ENCODE measurements at regions of chr6 and their contacts with region 1.

Region 1: DNA sequence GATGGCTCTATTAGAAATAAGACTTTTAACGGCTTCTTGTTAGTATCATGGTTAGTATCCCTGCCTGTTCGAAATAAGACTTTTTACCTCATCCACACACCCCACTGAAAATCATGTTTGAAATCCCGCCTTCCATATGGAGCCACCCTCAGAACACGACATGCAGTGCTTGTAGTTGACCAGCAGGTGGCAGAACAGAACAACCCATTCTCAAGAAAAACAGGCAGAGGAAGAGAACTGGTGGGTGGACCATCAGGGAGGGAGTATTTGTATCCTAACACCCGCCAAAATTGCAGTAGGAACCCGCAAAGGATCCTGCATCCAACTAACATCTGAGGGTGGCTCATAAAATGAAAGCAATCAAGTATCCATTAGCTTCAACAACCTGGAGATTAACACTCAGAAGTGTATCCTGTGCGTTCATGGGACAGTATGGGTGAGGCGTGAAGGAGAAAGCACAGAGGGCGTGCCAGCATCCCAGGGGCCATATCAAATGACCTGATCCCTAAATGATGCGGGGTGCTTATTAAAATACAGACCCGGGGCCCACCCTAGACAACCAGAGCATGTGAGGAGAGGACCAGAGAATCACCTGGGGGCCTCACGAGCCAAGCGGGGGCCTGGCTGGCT is 89.6 kb upstream of the NHSL1 start:
- DNase-seq: peak in 1 of 2 experiments; percentile 70
- H3K4me3 ChIP-seq: no peak overlapping the region
- H3K27ac ChIP-seq: no peak overlapping the region
- H3K4me1 ChIP-seq: peaks cover 3 to 11% (median 6%) of the 10 kb centered on the region in 4 experiments
- H3K27me3 ChIP-seq: no peaks in the 10 kb centered on the region
- CTCF ChIP-seq: peak; percentile 72 to 92 (median 83)
- EP300 ChIP-seq: no peak
- POLR2A ChIP-seq: no peak
- RAD21 ChIP-seq: peak; percentile 88 to 90

Region 2: DNA sequence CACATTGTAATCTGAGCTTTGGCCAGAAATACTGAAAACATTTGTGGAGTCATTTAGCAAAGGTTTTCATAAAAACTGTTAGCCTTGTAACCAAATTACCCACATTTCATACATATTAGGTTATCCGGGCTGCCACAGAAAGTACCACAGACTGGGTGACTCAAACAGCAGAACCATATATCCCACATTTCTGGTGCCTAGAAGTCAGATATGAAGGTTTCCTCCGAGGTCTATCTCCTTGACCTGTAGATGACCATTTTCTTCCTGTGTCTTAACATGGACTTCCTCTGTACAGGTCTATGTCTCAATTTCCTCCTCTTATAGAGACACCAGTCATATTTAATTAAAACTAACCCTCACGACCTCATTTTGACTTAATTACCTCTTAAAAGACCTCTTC is 260.7 kb before region 1 on chr6:
- CTCF ChIA-PET with region 1: no interaction called
- POLR2A ChIA-PET with region 1: no interaction called
- DNase-seq: no peak
- H3K4me3 ChIP-seq: no peak overlapping the region
- H3K27ac ChIP-seq: no peak overlapping the region
- H3K4me1 ChIP-seq: peaks cover 8 to 18% (median 11%) of the 10 kb centered on the region in 4 experiments; a peak in 6 of 7 replicates
- H3K27me3 ChIP-seq: no peaks in the 10 kb centered on the region
- CTCF ChIP-seq: no peak
- EP300 ChIP-seq: no peak
- POLR2A ChIP-seq: no peak
- RAD21 ChIP-seq: no peak

Region 3: GRCh38 chr6:138503881-138504680 is 84.8 kb before region 1 on chr6:
- CTCF ChIA-PET with region 1: no interaction called
- POLR2A ChIA-PET with region 1: no interaction called
- DNase-seq: no peak
- H3K4me3 ChIP-seq: no peak overlapping the region
- H3K27ac ChIP-seq: no peak overlapping the region
- H3K4me1 ChIP-seq: peaks cover 2 to 14% (median 6%) of the 10 kb centered on the region in 4 experiments; a peak in 5 of 7 replicates
- H3K27me3 ChIP-seq: no peaks in the 10 kb centered on the region
- CTCF ChIP-seq: no peak
- EP300 ChIP-seq: no peak
- POLR2A ChIP-seq: no peak
- RAD21 ChIP-seq: no peak

Region 4: DNA sequence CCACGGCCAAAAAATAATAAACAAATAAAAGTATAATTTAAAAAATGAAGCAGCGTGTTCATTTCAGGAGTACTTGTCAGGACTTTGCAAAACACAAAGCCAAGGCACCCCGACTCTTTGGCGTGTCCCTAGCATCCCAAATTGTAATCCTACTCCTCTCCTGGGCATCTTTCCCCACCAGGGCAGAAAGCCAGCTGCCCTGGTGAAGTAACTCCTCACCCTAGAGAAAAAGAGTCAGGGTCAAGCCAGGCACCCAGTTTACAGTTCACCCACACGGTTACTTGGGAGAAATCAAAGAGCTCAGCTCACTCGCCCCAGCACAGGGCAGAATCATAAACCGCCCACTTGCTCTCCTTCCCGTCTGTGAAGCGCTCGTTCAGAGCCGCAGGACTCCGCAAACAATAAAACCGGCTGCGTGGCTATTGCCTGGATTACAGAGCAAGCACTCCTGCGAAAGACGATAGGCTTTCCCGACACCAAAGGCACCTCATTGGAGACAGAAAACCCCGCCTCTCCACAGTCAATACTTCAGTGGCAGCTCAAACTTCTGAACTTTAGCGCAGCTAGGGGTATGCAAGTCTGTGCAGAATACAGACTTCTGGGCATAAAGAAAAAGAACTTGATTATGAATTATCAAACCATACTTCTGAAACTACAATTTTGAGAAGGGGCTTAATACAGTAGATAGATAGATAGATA is 16.6 kb before region 1 on chr6:
- CTCF ChIA-PET with region 1: interaction called, 12 read pairs
- POLR2A ChIA-PET with region 1: no interaction called
- DNase-seq: peak in 1 of 2 experiments; percentile 64
- H3K4me3 ChIP-seq: peak overlapping the region; percentile 50 to 66 (median 62)
- H3K27ac ChIP-seq: 0 out of 2 replicates have a peak overlapping the region, but pooled peaks have one; percentile 5
- H3K4me1 ChIP-seq: peaks cover 0 to 18% (median 6%) of the 10 kb centered on the region in 4 experiments; a peak in 5 of 7 replicates
- H3K27me3 ChIP-seq: no peaks in the 10 kb centered on the region
- CTCF ChIP-seq: no peak
- EP300 ChIP-seq: no peak
- POLR2A ChIP-seq: peak in 1 of 2 experiments; percentile 73; a peak in 2 of 3 replicates
- RAD21 ChIP-seq: no peak

Region 5: DNA sequence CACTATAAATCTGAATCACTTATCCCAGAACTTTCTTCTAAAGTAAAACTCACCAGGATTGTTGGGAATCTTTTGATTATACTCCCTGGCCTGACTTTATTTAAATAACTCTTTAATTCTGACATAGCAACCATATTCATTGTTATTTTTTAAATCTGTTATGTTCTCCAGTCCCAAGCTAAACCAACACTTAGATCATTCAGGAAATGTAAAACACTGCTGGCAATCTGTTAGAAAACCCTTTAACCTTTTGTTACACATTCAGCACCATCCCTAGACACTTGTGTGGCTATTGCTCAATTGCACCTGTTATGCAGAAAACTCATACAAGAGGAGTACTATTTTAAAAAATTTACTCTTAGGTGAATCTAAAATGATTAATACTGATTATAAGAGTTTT is 12.2 kb after region 1 on chr6:
- CTCF ChIA-PET with region 1: interaction called, 47 read pairs
- POLR2A ChIA-PET with region 1: no interaction called
- DNase-seq: no peak
- H3K4me3 ChIP-seq: no peak overlapping the region
- H3K27ac ChIP-seq: no peak overlapping the region
- H3K4me1 ChIP-seq: peaks cover 0 to 11% (median under 1%) of the 10 kb centered on the region in 4 experiments; a peak in 2 of 7 replicates
- H3K27me3 ChIP-seq: no peaks in the 10 kb centered on the region
- CTCF ChIP-seq: no peak
- EP300 ChIP-seq: no peak
- POLR2A ChIP-seq: no peak
- RAD21 ChIP-seq: no peak

Region 6: GRCh38 chr6:138692058-138692977 is 103.4 kb after region 1 on chr6:
- CTCF ChIA-PET with region 1: interaction called, 12 read pairs
- POLR2A ChIA-PET with region 1: no interaction called
- DNase-seq: peak in 1 of 2 experiments; percentile 87
- H3K4me3 ChIP-seq: peak overlapping the region; percentile 74 to 95 (median 83)
- H3K27ac ChIP-seq: peak overlapping the region; percentile 52; the same call in 1 of the 2 replicates
- H3K4me1 ChIP-seq: peaks cover 0 to 6% (median 2%) of the 10 kb centered on the region in 4 experiments; a peak in 4 of 7 replicates
- H3K27me3 ChIP-seq: peaks cover 0 to 3% (median 0%) of the 10 kb centered on the region in 4 experiments; a peak in 2 of 7 replicates
- CTCF ChIP-seq: peak; percentile 52 to 63 (median 62)
- EP300 ChIP-seq: no peak
- POLR2A ChIP-seq: no peak
- RAD21 ChIP-seq: peak; percentile 21 to 50; a peak in 3 of 4 replicates

Region 7: DNA sequence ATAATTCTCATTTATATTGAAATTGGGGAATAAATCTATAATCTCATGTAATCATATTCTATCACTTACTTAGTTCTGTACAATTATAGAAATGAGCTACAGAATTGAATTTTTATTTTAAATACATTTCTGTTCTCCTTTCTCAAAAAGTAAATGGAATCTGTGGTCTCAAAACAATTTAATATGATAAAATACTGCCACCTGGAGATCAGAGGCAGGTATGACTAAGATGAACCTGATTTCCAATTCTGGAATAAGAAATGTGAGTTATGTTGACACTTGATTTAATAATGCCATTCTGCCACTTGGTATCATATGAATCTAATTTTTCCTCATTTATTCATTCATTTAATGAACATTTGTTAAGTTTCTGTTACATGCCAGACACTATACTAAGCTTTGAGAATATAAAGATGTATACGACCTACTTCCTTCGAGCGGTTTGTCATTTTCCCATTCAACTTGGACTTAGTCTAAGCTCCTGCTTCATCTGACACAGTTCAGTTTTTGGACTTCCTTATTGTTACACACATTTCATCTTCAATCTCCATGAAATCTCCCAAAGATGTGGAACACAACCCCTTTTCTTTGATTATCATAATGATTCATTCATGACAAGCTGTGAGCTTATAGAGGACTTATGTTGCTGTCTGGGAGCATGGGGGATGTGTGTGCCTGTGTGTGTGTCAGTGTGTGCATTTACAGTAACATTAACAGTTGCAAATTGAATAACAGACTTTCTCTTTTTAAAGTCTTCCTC is 177.2 kb after region 1 on chr6:
- CTCF ChIA-PET with region 1: interaction called, 62 read pairs
- POLR2A ChIA-PET with region 1: interaction called, 3 read pairs
- DNase-seq: no peak
- H3K4me3 ChIP-seq: no peak overlapping the region
- H3K27ac ChIP-seq: no peak overlapping the region
- H3K4me1 ChIP-seq: no peaks in the 10 kb centered on the region
- H3K27me3 ChIP-seq: no peaks in the 10 kb centered on the region
- CTCF ChIP-seq: peak in 2 of 3 experiments; percentile 25 to 43; a peak in 2 of 4 replicates
- EP300 ChIP-seq: no peak
- POLR2A ChIP-seq: no peak
- RAD21 ChIP-seq: peak; percentile 55 to 68

Measured in H1 (cell line).